ENCODE measurements at regions of chr10 and their contacts with region 1.

Region 1: GRCh38 chr10:31851216-31851615 is 77.4 kb downstream of the ARHGAP12 start:
- DNase-seq: no peak
- H3K4me3 ChIP-seq: no peak overlapping the region
- H3K27ac ChIP-seq: no peak overlapping the region
- H3K4me1 ChIP-seq: peaks cover 5 to 11% of the 10 kb centered on the region in 2 donors
- H3K27me3 ChIP-seq: no peaks in the 10 kb centered on the region
- CTCF ChIP-seq: no peak
- POLR2A ChIP-seq: no peak

Region 2: GRCh38 chr10:31947144-31947926 is 96.1 kb after region 1 on chr10:
- intact Hi-C with region 1: loop called in 1 of 2 experiments (anchors 10 kb)
- DNase-seq: peak in 1 of 7 donors; percentile 25
- H3K4me3 ChIP-seq: peak overlapping the region in 1 of 4 donors; percentile 2
- H3K27ac ChIP-seq: no peak overlapping the region
- H3K4me1 ChIP-seq: peaks cover 14 to 33% of the 10 kb centered on the region in 2 donors
- H3K27me3 ChIP-seq: no peaks in the 10 kb centered on the region
- CTCF ChIP-seq: peak in 5 of 6 experiments; percentile 50 to 71 (median 57)
- POLR2A ChIP-seq: no peak

Region 3: DNA sequence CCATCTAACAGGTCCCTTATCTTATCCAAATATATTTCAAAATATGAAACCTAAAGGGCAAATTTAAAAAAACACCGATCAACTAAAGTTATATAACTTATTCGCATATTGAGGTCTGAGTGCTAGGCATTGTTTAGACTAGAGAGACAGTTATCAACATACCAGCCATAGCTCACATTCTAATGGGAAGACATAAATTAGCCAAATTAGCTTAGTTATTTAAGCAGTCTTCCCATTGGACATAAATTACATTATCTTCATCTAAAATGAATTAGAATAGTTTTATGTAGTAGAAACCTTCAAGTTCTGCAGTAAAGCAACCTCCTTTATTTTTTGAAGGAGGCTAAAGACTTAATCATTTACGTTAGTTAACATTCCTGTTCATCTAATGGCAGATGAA is 187.6 kb after region 1 on chr10:
- intact Hi-C with region 1: no loop called
- DNase-seq: no peak
- H3K4me3 ChIP-seq: no peak overlapping the region
- H3K27ac ChIP-seq: no peak overlapping the region
- H3K4me1 ChIP-seq: peaks cover 9 to 49% of the 10 kb centered on the region in 2 donors
- H3K27me3 ChIP-seq: no peaks in the 10 kb centered on the region
- CTCF ChIP-seq: no peak
- POLR2A ChIP-seq: no peak

Measured in adrenal gland (tissue), 19 donors.